Endothelial cell of umbilical vein (primary cell): ENCODE measurements at regions of chr13 and their contacts with region 1.

Region 1: GRCh38 chr13:46160471-46161066 is 21.4 kb downstream of the LCP1 start:
- DNase-seq: peak; percentile 69
- H3K4me3 ChIP-seq: no peak overlapping the region
- H3K27ac ChIP-seq: no peak overlapping the region
- H3K4me1 ChIP-seq: no peaks in the 10 kb centered on the region
- H3K27me3 ChIP-seq: peaks cover 8 to 24% of the 10 kb centered on the region in 2 experiments
- CTCF ChIP-seq: peak; percentile 59 to 74
- POLR2A ChIP-seq: no peak

Region 2: DNA sequence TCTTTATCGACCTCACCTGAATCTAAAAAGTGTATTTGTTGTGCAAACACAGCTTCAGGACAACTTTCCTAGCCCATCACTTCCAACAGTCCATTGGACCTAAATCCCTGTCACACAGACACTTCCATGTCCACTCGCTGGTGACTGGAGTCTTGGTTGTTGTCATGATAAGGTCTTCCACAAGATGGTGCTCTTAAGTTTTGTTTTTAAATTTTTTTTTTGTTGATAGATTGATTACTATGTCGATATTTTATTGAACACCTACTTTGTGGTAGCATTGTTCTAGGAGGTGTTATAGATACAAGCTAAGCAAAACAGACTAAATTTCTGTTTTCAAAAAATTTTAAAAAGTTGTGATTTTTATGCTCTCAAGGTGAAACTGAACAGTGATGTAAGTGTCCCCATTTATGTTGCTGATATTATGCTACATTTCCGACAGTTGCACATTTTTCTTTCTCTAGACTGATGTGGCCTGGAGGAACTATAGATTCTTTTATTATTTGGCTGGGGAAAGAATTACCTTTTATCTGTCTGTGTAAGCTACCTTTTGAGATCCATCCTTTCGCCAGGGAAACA is 537.0 kb before region 1 on chr13:
- CTCF ChIA-PET with region 1: interaction called, 16 read pairs
- POLR2A ChIA-PET with region 1: no interaction called
- dilution Hi-C with region 1: no loop called
- intact Hi-C with region 1: loop called (anchors 1 kb)
- DNase-seq: peak; percentile 31
- H3K4me3 ChIP-seq: no peak overlapping the region
- H3K27ac ChIP-seq: no peak overlapping the region
- H3K4me1 ChIP-seq: no peaks in the 10 kb centered on the region
- H3K27me3 ChIP-seq: peaks cover 2 to 16% of the 10 kb centered on the region in 2 experiments
- CTCF ChIP-seq: peak; percentile 19 to 36
- POLR2A ChIP-seq: no peak

Region 3: GRCh38 chr13:46126552-46127357 is 33.8 kb before region 1 on chr13:
- CTCF ChIA-PET with region 1: interaction called, 10 read pairs
- POLR2A ChIA-PET with region 1: no interaction called
- dilution Hi-C with region 1: no loop called
- intact Hi-C with region 1: no loop called
- DNase-seq: peak; percentile 85
- H3K4me3 ChIP-seq: no peak overlapping the region
- H3K27ac ChIP-seq: no peak overlapping the region
- H3K4me1 ChIP-seq: peaks cover 22% of the 10 kb centered on the region
- H3K27me3 ChIP-seq: peaks cover 16 to 21% of the 10 kb centered on the region in 2 experiments
- CTCF ChIP-seq: peak; percentile 86 to 97
- POLR2A ChIP-seq: no peak

Region 4: GRCh38 chr13:46143184-46143701 is 17.3 kb before region 1 on chr13:
- CTCF ChIA-PET with region 1: interaction called, 26 read pairs
- POLR2A ChIA-PET with region 1: no interaction called
- dilution Hi-C with region 1: no loop called
- intact Hi-C with region 1: no loop called
- DNase-seq: no peak
- H3K4me3 ChIP-seq: no peak overlapping the region
- H3K27ac ChIP-seq: no peak overlapping the region
- H3K4me1 ChIP-seq: no peaks in the 10 kb centered on the region
- H3K27me3 ChIP-seq: peaks cover 21 to 24% of the 10 kb centered on the region in 2 experiments
- CTCF ChIP-seq: no peak
- POLR2A ChIP-seq: no peak

Region 5: DNA sequence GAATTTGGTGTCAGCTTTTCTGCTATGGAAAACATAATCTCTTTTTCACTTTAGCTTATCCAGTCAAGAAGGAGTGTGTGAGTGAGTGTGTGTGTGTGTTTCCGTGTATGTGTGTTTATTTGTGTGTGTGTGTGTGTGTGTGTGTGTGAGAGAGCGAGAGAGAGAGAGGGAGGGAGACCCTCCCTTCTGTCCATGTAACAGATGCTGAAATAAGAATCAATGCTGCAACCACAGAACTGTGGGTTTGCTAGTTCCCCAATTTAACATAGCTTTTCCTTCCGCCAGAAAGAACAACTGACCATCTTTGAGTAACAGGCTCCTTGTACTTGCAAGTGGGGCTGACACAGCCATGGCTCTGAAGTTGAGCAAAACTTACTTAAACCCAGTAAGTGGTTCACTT is 16.2 kb after region 1 on chr13:
- CTCF ChIA-PET with region 1: interaction called, 11 read pairs
- POLR2A ChIA-PET with region 1: no interaction called
- dilution Hi-C with region 1: no loop called
- intact Hi-C with region 1: no loop called
- DNase-seq: no peak
- H3K4me3 ChIP-seq: no peak overlapping the region
- H3K27ac ChIP-seq: no peak overlapping the region
- H3K4me1 ChIP-seq: no peaks in the 10 kb centered on the region
- H3K27me3 ChIP-seq: peaks cover 2 to 27% of the 10 kb centered on the region in 2 experiments
- CTCF ChIP-seq: no peak
- POLR2A ChIP-seq: no peak

Region 6: DNA sequence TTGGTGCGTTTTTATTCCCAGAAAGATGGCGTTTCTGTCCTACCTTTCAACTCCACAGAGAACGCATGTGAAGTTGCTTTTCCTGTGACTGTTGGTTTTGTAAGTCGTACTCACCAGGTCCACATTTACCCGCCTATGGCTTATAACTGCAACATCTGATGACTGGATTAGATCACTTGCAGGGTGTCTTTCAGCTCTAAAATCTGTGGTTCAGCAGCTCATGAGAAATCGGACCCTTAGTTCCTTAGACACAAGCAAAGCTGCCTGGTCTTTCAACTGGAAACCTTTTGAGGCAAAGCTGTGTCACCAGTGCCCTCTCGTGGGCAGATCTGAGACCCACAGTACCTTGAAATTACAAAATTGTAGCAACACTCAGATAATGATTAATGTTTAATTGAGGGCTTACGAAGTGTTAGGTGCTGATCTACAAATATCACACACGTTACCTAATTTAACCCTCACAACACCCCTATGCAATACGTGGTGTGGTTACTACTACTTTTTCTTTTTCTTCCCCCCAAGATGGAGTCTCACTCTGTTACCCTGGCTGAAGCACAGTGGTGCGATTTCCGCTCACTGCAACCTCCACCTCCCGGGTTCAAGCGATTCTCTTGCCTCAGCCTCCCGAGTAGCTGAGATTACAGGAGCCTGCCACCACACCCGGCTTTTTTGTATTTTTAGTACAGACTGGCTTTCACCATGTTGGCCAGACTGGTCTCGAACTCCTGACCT is 161.1 kb after region 1 on chr13:
- CTCF ChIA-PET with region 1: interaction called, 36 read pairs
- POLR2A ChIA-PET with region 1: no interaction called
- dilution Hi-C with region 1: no loop called
- intact Hi-C with region 1: loop called (anchors 1 kb)
- DNase-seq: peak; percentile 63
- H3K4me3 ChIP-seq: no peak overlapping the region
- H3K27ac ChIP-seq: no peak overlapping the region
- H3K4me1 ChIP-seq: no peaks in the 10 kb centered on the region
- H3K27me3 ChIP-seq: peaks cover 9 to 12% of the 10 kb centered on the region in 2 experiments
- CTCF ChIP-seq: peak; percentile 68 to 74
- POLR2A ChIP-seq: no peak